ENCODE measurements at regions of chr6 and their contacts with region 1.

Region 1: DNA sequence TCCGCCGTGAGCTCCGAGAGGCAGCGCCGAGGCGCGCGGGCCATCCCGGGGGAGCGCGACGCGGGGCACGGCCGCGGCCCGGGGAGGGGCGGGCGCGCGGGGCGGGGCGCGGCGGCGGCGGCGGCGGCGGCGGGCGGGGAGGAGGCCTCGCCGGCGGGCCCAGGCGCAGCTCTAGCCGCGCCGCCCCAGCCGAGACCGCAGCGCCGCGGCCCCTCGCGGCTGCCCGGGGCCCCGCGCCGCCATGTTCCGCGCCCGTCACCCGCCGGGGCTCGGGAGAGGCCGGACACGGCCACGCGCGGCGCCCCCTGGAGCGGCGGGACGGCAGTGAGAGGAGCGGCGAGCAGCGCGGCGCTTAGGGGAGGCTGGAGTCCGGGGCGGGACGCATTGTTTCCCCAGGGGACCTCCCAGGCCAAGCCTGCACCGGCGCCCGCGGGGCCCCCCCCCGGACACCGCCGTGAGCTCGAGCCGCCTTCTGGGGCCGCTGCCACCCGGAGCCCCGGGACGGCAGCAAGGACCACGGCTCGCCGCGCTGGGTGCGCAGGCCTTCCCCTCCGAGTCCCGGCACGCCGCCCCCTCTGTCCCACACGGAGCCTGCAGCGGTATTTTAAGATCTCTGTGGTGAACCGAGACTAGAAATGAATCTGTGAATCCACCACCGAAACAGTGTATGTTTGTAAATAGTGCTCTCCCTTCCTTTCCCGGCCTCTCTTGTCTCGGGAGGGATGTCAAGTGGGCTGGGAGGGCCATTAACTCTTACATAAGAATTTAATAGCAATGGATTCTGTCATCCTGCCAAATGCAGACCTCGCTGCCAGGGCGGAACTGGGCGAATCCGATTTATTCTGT is at the start of gene KIF13A:
- DNase-seq: peak; percentile 58
- H3K4me3 ChIP-seq: peak within 1 kb of the TSS; percentile 82 to 96 (median 91)
- H3K27ac ChIP-seq: peak within 1 kb of the TSS; percentile 80
- H3K4me1 ChIP-seq: peaks cover 28% of the 10 kb centered on the region
- H3K27me3 ChIP-seq: no peaks in the 10 kb centered on the region
- CTCF ChIP-seq: peak in 1 of 2 donors; percentile 22
- total RNA-seq, gene KIF13A: 71.2 to 85.5 TPM

Region 2: GRCh38 chr6:17865798-17866725 is 121.7 kb before region 1 on chr6:
- CTCF ChIA-PET with region 1: no interaction called
- dilution Hi-C with region 1: no loop called
- in situ Hi-C with region 1: loop called in 1 of 2 experiments (anchors 10 kb)
- intact Hi-C with region 1: loop called (anchors 1 kb)
- DNase-seq: peak; percentile 99
- H3K4me3 ChIP-seq: peak overlapping the region in 1 of 3 experiments; percentile 14
- H3K27ac ChIP-seq: peak overlapping the region; percentile 99
- H3K4me1 ChIP-seq: peaks cover 63% of the 10 kb centered on the region
- H3K27me3 ChIP-seq: no peaks in the 10 kb centered on the region
- CTCF ChIP-seq: no peak

Region 3: GRCh38 chr6:17928514-17929430 is 59.0 kb before region 1 on chr6:
- CTCF ChIA-PET with region 1: interaction called, 3 read pairs
- dilution Hi-C with region 1: no loop called
- in situ Hi-C with region 1: no loop called
- intact Hi-C with region 1: loop called (anchors 5 kb)
- DNase-seq: peak; percentile 30
- H3K4me3 ChIP-seq: no peak overlapping the region
- H3K27ac ChIP-seq: peak overlapping the region; percentile 49
- H3K4me1 ChIP-seq: peaks cover 5% of the 10 kb centered on the region
- H3K27me3 ChIP-seq: no peaks in the 10 kb centered on the region
- CTCF ChIP-seq: no peak

Region 4: DNA sequence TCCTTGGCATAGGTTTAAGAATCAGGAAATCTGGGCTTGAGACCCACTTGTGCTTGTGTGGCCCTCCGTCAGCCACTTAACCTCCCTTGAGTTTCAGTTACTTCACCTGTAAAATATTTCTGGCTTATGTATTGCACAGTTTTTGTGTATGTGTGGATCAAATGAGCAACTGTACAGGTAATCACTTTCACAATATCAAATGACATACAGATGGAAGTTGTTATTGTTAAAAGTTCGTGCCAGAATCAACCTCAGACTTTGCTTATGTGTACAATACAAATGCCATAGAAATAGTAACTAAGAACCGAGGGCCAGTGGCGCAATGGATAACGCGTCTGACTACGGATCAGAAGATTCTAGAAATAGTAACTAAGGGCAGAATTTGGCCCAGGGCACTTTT is 65.3 kb after region 1 on chr6:
- CTCF ChIA-PET with region 1: no interaction called
- dilution Hi-C with region 1: loop called (anchors 5 kb)
- in situ Hi-C with region 1: loop called in 1 of 2 experiments (anchors 10 kb)
- intact Hi-C with region 1: loop called (anchors 5 kb)
- DNase-seq: peak; percentile 89
- H3K4me3 ChIP-seq: no peak overlapping the region
- H3K27ac ChIP-seq: peak overlapping the region; percentile 73
- H3K4me1 ChIP-seq: peaks cover 35% of the 10 kb centered on the region
- H3K27me3 ChIP-seq: no peaks in the 10 kb centered on the region
- CTCF ChIP-seq: no peak

Region 5: DNA sequence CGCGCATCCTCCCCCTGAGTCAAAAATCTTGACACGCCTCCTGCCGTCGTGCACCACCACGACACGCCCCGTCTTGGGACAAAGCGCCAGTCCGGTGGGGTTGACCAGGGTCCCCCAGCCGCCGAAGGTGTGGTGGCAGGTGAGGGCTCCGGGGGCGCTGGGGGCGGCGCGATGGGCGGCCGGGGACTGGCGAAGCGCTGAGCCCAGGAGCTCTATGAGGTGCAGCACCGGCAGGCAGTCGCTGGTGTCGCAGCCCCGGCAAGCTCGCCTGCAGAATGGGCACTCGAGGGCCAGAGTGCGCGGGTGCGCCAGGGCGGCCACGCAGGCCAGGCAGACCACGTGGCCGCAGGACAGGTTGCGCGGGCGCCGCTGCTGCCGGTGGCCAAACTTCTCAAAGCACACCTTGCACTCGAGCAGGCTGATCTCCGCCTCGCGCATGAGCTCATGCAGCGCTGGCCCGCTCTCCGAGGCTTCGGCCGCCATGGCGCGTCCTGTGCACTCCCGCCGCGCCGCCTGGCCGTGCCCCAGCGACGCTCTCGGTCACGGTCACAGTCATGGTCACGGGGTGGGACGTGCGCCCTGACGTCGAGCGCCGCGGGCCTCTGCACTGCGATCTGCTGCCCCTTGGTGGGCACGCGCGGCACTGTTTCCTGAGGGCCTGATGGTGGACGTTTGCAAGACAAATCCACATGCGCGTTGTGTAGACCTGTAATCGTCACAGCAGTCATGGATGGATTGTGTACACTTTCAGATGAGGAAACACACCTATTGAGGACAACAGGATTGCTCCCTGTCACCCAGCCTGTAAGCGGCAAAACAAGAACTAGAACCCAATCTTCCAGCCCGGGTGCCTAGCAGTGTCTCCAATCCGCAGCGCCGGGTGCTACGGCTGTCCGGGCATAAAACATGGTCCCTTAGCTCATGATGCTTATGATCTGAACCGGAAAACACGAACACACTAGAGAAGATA is 134.6 kb after region 1 on chr6 and contains the start of gene NHLRC1:
- CTCF ChIA-PET with region 1: no interaction called
- dilution Hi-C with region 1: no loop called
- in situ Hi-C with region 1: loop called (anchors 5 to 10 kb)
- intact Hi-C with region 1: loop called (anchors 1 kb)
- DNase-seq: peak; percentile 84
- H3K4me3 ChIP-seq: peak within 1 kb of the TSS in 2 of 3 experiments; percentile 44 to 54
- H3K27ac ChIP-seq: peak within 1 kb of the TSS; percentile 31
- H3K4me1 ChIP-seq: peaks cover 7% of the 10 kb centered on the region
- H3K27me3 ChIP-seq: no peaks in the 10 kb centered on the region
- CTCF ChIP-seq: peak; percentile 91 to 96
- total RNA-seq, gene NHLRC1: 2.1 to 3.3 TPM

Region 6: DNA sequence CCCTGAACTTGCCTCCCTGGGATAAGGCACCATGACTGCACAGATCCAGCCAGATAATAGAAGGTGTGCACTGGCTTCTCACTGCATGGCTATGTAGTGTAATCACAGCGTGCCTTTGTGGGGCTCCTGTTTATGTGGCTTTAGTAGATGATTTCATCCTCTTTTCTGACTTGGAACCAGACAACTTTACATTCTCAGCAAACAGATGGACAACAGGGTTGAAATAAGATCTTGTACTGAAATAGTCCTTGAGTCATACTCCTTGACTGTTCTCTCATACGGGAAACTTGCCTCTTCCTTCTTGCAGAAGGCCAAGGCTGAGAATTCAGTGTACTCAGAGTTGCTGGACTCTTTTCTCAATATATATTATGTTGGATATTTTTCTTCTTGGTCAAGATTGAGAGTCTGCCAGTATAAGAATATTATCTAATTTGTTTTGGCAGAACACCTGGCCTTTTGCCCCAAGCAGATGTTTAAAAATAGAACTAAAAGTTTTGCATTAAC is 374.3 kb after region 1 on chr6:
- CTCF ChIA-PET with region 1: no interaction called
- dilution Hi-C with region 1: no loop called
- in situ Hi-C with region 1: no loop called
- intact Hi-C with region 1: no loop called
- DNase-seq: peak; percentile 90
- H3K4me3 ChIP-seq: no peak overlapping the region
- H3K27ac ChIP-seq: peak overlapping the region; percentile 31
- H3K4me1 ChIP-seq: peaks cover 20% of the 10 kb centered on the region
- H3K27me3 ChIP-seq: no peaks in the 10 kb centered on the region
- CTCF ChIP-seq: no peak

Measured in mammary epithelial cell (primary cell).